Right cardiac atrium (tissue), 5 donors: ENCODE measurements at regions of chr3 and their contacts with region 1.

Region 1: GRCh38 chr3:134473868-134474546 is 11.8 kb downstream of the ANAPC13 start:
- DNase-seq: peak; percentile 61 to 83 (median 64)
- ATAC-seq: peak; percentile 37 to 50
- H3K4me3 ChIP-seq: no peak overlapping the region
- H3K27ac ChIP-seq: no peak overlapping the region
- H3K4me1 ChIP-seq: peaks cover 2% of the 10 kb centered on the region
- H3K27me3 ChIP-seq: no peaks in the 10 kb centered on the region

Region 2: GRCh38 chr3:134212906-134213665 is 260.9 kb before region 1 on chr3:
- intact Hi-C with region 1: loop called in 2 of 4 experiments (anchors 5 to 10 kb)
- DNase-seq: peak; percentile 75 to 90 (median 87)
- ATAC-seq: peak; percentile 77 to 84
- H3K4me3 ChIP-seq: no peak overlapping the region
- H3K27ac ChIP-seq: no peak overlapping the region
- H3K4me1 ChIP-seq: peaks cover 4% of the 10 kb centered on the region
- H3K27me3 ChIP-seq: no peaks in the 10 kb centered on the region

Region 3: GRCh38 chr3:134308350-134308891 is 165.6 kb before region 1 on chr3:
- intact Hi-C with region 1: loop called (anchors 2 to 5 kb)
- DNase-seq: peak; percentile 83 to 92 (median 89)
- ATAC-seq: peak; percentile 79 to 82
- H3K4me3 ChIP-seq: no peak overlapping the region
- H3K27ac ChIP-seq: peak overlapping the region; percentile 66
- H3K4me1 ChIP-seq: peaks cover 7% of the 10 kb centered on the region
- H3K27me3 ChIP-seq: no peaks in the 10 kb centered on the region

Region 4: GRCh38 chr3:134373994-134374790 is 99.8 kb before region 1 on chr3 and contains the start of gene AMOTL2:
- intact Hi-C with region 1: loop called in 2 of 4 experiments (anchors 5 kb)
- DNase-seq: peak; percentile 88 to 96 (median 94)
- ATAC-seq: peak; percentile 87 to 89
- H3K4me3 ChIP-seq: peak within 1 kb of the TSS; percentile 77
- H3K27ac ChIP-seq: peak within 1 kb of the TSS; percentile 99
- H3K4me1 ChIP-seq: peaks cover 27% of the 10 kb centered on the region
- H3K27me3 ChIP-seq: no peaks in the 10 kb centered on the region
- total RNA-seq, gene AMOTL2: 44.6 to 57.6 (median 47.6) TPM

Region 5: DNA sequence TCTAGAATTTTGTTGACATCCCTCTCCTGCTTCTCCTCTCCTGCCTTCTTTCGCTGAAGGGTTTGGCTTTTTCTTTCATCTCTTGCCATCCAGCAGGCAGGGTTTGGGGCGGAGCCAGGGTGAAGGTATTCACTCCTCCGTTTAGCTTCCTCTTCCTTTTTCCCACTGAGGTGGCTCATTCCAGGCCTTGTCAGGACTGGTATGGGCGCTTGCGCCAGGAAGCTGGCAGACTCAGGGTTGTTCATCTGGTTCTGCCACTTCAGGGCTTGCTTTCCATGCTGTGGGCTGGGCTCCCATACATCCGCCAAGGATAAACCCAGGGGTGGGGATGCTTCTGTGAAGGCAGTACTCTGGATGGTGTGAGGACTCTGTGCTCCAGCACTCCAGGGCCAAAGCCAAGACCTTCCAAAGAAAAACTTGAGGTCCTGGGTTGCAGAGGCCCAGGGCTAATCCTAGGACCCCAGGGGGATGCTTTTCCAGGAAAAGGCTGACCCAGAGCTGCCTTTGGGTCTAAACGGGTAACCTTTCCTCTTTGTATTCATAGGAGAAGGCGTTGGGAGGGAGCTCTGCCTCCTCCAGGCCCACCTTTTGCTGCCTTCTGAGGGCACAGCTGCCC is 92.1 kb before region 1 on chr3:
- intact Hi-C with region 1: loop called in 3 of 4 experiments (anchors 5 to 10 kb)
- DNase-seq: no peak
- ATAC-seq: peak in 1 of 2 donors; percentile 50
- H3K4me3 ChIP-seq: no peak overlapping the region
- H3K27ac ChIP-seq: no peak overlapping the region
- H3K4me1 ChIP-seq: no peaks in the 10 kb centered on the region
- H3K27me3 ChIP-seq: no peaks in the 10 kb centered on the region